Activated CD4-positive, alpha-beta T cell treated with anti-CD3 and anti-CD28 coated beads for 36 hours (primary cell): ENCODE measurements at regions of chr15 and their contacts with region 1.

Region 1: DNA sequence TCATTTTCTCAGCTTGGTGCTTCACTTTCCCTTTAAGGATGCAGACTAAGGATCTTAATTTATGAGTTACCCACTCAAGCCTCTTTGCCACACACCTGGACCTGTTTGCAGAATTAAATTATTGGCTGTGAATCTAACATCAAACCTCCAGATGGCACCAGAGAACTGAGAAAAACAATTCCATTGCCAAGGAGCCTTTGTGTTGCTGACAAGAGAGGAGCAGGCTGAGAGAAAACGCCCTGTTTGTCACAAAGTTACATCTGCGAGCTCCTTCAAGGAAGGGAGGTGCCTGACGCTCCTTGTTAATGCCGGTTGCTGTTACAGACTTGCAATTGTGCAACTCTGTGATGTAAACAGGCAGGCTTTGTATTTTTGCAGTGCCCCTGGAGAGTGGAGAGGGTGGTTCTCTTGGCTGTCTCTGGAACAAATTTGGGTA is 36.3 kb upstream of the TMC3 start:
- DNase-seq: peak; percentile 24
- ATAC-seq: peak; percentile 69
- H3K4me3 Mint-ChIP-seq: no peak overlapping the region
- H3K27ac Mint-ChIP-seq: no peak overlapping the region
- H3K4me1 Mint-ChIP-seq: peaks cover 14% of the 10 kb centered on the region
- H3K27me3 Mint-ChIP-seq: no peaks in the 10 kb centered on the region

Region 2: GRCh38 chr15:81163961-81164800 is 246.2 kb before region 1 on chr15:
- CTCF ChIA-PET with region 1: no interaction called
- POLR2A ChIA-PET with region 1: no interaction called
- intact Hi-C with region 1: no loop called
- DNase-seq: no peak
- ATAC-seq: no peak
- H3K4me3 Mint-ChIP-seq: no peak overlapping the region
- H3K27ac Mint-ChIP-seq: no peak overlapping the region
- H3K4me1 Mint-ChIP-seq: peaks cover 19% of the 10 kb centered on the region
- H3K27me3 Mint-ChIP-seq: peaks cover 9% of the 10 kb centered on the region

Region 3: GRCh38 chr15:81174125-81174791 is 236.1 kb before region 1 on chr15:
- CTCF ChIA-PET with region 1: no interaction called
- POLR2A ChIA-PET with region 1: no interaction called
- intact Hi-C with region 1: no loop called
- DNase-seq: no peak
- ATAC-seq: no peak
- H3K4me3 Mint-ChIP-seq: no peak overlapping the region
- H3K27ac Mint-ChIP-seq: no peak overlapping the region
- H3K4me1 Mint-ChIP-seq: no peaks in the 10 kb centered on the region
- H3K27me3 Mint-ChIP-seq: peaks cover 12% of the 10 kb centered on the region

Region 4: DNA sequence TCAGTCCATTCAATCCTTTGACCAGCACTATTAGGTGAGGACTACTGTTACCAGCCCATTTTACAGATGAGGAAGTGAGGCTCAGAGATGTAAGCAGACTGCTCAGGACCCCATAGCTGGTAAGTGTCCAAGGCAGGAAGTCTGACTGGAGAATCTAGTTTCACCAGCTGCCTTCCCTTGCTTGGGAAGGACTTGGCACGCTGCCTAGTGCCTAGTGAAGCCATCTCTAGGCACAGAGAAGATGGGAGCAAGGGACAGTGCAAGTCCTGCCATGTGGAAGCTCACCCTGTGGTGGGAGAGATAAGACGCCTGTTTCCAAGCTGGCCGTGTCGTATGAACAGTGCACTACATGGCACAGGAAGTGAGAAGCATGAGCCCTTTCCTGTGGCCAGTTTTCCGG is 75.5 kb after region 1 on chr15:
- CTCF ChIA-PET with region 1: no interaction called
- POLR2A ChIA-PET with region 1: no interaction called
- intact Hi-C with region 1: no loop called
- DNase-seq: no peak
- ATAC-seq: no peak
- H3K4me3 Mint-ChIP-seq: no peak overlapping the region
- H3K27ac Mint-ChIP-seq: no peak overlapping the region
- H3K4me1 Mint-ChIP-seq: no peaks in the 10 kb centered on the region
- H3K27me3 Mint-ChIP-seq: peaks cover 2% of the 10 kb centered on the region

Region 5: GRCh38 chr15:82197733-82198594 is 787.6 kb after region 1 on chr15:
- CTCF ChIA-PET with region 1: no interaction called
- POLR2A ChIA-PET with region 1: no interaction called
- intact Hi-C with region 1: loop called (anchors 2 to 5 kb)
- DNase-seq: peak; percentile 75
- ATAC-seq: peak; percentile 80
- H3K4me3 Mint-ChIP-seq: no peak overlapping the region
- H3K27ac Mint-ChIP-seq: no peak overlapping the region
- H3K4me1 Mint-ChIP-seq: no peaks in the 10 kb centered on the region
- H3K27me3 Mint-ChIP-seq: no peaks in the 10 kb centered on the region